ENCODE measurements at regions of chrX and their contacts with region 1.

Region 1: GRCh38 chrX:43939187-43939926 is 33.8 kb downstream of the NDP start:
- DNase-seq: no peak
- H3K4me3 ChIP-seq: no peak overlapping the region
- H3K27ac ChIP-seq: no peak overlapping the region
- H3K4me1 ChIP-seq: no peaks in the 10 kb centered on the region
- H3K27me3 ChIP-seq: no peaks in the 10 kb centered on the region
- CTCF ChIP-seq: peak in 1 of 3 donors; percentile 37
- EP300 ChIP-seq: no peak
- POLR2A ChIP-seq: no peak

Region 2: DNA sequence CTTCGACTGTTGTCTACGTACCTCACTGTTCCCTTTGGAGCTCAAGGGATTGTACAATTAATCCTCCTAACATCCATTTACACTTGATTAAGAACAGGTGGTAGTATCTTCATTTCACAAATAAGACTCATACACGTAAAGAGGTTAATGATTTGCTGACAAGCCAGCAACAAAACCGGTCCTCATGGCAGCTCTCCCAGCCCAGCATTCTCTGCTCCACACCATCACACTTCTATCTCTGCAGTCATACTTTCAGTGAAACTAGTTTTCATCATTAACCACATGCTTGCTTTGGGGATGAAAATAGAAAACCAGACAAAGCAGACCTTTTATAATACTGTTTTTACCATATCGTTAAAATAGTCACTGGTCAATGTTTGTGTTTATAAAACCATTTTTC is 1987.3 kb before region 1 on chrX:
- intact Hi-C with region 1: no loop called
- DNase-seq: no peak
- H3K4me3 ChIP-seq: no peak overlapping the region
- H3K27ac ChIP-seq: no peak overlapping the region
- H3K4me1 ChIP-seq: no peaks in the 10 kb centered on the region
- H3K27me3 ChIP-seq: no peaks in the 10 kb centered on the region
- CTCF ChIP-seq: no peak
- EP300 ChIP-seq: no peak
- POLR2A ChIP-seq: no peak

Region 3: GRCh38 chrX:42538405-42538804 is 1401.0 kb before region 1 on chrX:
- intact Hi-C with region 1: no loop called
- DNase-seq: no peak
- H3K4me3 ChIP-seq: no peak overlapping the region
- H3K27ac ChIP-seq: no peak overlapping the region
- H3K4me1 ChIP-seq: no peaks in the 10 kb centered on the region
- H3K27me3 ChIP-seq: no peaks in the 10 kb centered on the region
- CTCF ChIP-seq: no peak
- EP300 ChIP-seq: no peak
- POLR2A ChIP-seq: no peak

Region 4: GRCh38 chrX:43822015-43822414 is 117.3 kb before region 1 on chrX:
- intact Hi-C with region 1: no loop called
- DNase-seq: no peak
- H3K4me3 ChIP-seq: no peak overlapping the region
- H3K27ac ChIP-seq: no peak overlapping the region
- H3K4me1 ChIP-seq: no peaks in the 10 kb centered on the region
- H3K27me3 ChIP-seq: no peaks in the 10 kb centered on the region
- CTCF ChIP-seq: no peak
- EP300 ChIP-seq: no peak
- POLR2A ChIP-seq: no peak

Region 5: DNA sequence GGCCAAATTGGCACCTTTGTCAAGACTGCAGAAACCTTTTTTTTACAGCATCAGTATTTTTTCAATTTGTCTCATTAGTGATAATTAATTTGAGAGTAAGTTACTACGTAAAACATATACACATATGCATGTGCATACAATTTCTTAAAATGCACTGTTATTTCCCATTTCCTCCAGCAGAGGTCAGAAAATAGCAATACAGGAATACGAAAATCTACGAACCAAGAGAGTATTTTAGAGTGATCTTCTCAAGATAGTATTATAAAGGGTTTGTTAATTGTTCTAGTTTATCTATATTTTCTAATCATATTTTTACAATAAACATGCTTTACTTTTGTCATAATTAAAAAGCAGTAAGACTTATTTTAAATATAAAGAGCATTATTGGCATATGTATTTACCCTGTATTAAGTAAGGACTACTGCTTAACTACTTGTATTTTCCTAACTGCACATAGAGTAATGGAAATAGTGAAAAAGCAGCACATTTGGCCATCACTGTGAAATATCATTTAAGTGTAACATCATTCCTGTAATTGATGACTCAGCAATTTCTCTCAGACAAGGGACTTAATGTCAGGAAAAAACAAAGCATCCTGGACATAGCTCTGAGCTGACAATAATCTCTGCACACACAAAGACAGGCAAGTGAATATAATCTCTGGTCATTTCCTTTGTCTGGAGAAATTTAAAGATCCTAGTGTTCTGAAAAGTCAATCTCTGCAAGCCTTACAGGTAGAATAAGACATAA is 102.7 kb before region 1 on chrX:
- intact Hi-C with region 1: loop called in 3 of 4 experiments (anchors 5 to 10 kb)
- DNase-seq: no peak
- H3K4me3 ChIP-seq: no peak overlapping the region
- H3K27ac ChIP-seq: no peak overlapping the region
- H3K4me1 ChIP-seq: no peaks in the 10 kb centered on the region
- H3K27me3 ChIP-seq: no peaks in the 10 kb centered on the region
- CTCF ChIP-seq: peak; percentile 15 to 35 (median 32)
- EP300 ChIP-seq: no peak
- POLR2A ChIP-seq: no peak

Region 6: DNA sequence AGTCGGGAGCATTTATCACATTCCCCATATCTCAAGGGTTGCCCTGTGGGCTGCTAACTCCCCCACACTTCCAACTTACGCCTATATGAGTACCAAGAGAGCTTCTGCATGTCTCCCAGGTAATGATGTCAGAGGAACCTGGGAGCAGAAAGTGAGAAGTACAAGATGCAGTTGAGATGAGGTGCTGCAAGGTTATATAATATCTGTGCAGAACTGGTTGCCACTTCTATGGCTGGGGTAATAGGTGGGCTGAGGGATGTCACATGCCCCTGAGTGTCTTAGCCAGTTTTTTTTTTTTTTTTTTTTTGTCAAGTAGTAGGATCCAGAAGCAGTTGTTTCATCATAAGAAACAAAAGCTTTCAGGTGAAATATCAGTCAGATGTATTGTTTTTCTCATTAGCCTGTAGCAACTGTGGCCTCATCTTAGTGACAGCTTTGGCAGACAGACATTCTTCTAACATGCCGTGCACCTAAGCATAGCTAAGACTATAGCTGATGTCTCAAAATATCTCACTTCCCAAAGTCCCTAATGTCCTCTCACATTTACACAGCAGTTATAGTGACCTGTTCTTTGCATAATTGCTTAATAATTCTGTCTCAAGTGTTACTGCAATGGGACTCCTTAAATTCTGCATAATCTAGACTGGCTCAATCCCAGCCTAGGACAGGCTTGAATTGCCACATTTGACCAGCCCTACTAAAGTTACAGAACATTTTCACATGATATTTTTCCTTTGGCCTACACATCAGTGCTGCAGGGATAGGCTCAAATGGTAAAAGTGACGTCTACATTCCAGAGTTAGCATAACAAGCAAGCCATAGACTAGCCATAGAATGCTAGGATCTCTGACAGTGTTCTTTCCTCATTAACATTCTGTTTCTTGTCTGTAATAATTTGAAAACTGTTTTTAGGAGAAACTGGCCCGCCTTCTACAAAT is 39.2 kb before region 1 on chrX:
- intact Hi-C with region 1: no loop called
- DNase-seq: no peak
- H3K4me3 ChIP-seq: no peak overlapping the region
- H3K27ac ChIP-seq: no peak overlapping the region
- H3K4me1 ChIP-seq: peaks cover 2% of the 10 kb centered on the region
- H3K27me3 ChIP-seq: no peaks in the 10 kb centered on the region
- CTCF ChIP-seq: no peak
- EP300 ChIP-seq: no peak
- POLR2A ChIP-seq: no peak